Natural killer cell (primary cell): ENCODE measurements at regions of chr22 and their contacts with region 1.

Region 1: DNA sequence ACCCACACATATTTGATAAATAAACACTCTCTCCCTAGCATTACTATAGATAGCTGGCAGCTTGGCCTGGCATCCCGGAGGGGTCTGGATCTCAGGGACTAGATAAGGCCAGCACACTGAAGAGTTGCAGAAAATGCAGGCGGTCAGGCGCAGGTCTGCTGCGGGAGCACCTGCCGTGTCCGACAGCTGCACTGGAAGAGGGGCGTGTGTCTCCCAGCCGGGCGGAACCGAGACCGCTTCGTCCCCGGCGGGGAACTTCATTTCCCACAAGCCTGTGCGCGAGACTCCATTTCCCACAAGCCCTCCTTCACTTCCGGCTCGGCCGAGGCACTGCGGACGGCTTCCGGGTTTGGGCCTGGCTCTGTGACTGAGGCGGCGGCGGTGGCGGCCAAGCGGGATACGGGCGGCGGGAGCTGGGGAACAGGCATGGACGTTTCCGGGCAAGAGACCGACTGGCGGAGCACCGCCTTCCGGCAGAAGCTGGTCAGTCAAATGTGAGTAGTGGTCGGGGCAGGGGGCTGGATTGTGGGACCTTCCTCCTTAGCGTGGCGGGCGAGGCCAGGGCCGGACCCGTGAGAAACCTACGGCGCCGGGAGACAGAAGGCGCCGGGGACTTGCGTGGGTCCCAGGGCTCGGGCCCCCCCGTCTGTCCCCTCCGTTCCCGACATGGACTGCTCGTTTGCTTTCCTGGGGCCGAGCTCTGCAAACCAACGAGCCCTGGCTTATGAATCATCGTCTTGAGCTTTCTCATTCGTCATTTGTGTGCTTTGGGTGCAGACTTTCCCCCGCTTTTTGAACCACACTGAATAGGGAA is at the start of gene MED15:
- DNase-seq: peak; percentile 80 to 93
- ATAC-seq: peak; percentile 77 to 92 (median 90)
- H3K4me3 ChIP-seq: peak within 1 kb of the TSS; percentile 90
- H3K4me3 Mint-ChIP-seq: peak within 1 kb of the TSS; percentile 98
- H3K27ac ChIP-seq: peak within 1 kb of the TSS; percentile 91
- H3K27ac Mint-ChIP-seq: peak within 1 kb of the TSS; percentile 95 to 98
- H3K4me1 ChIP-seq: peaks cover 42% of the 10 kb centered on the region
- H3K4me1 Mint-ChIP-seq: peaks cover 52 to 54% of the 10 kb centered on the region in 2 donors
- H3K27me3 ChIP-seq: no peaks in the 10 kb centered on the region
- H3K27me3 Mint-ChIP-seq: no peaks in the 10 kb centered on the region
- CTCF ChIP-seq: no peak
- total RNA-seq, gene MED15: 269 to 291 (median 270) TPM

Region 2: GRCh38 chr22:20495861-20496681 is 11.4 kb before region 1 on chr22:
- intact Hi-C with region 1: loop called (anchors 1 kb)
- DNase-seq: peak; percentile 91 to 96
- ATAC-seq: peak; percentile 94 to 98 (median 95)
- H3K4me3 ChIP-seq: peak overlapping the region; percentile 66
- H3K4me3 Mint-ChIP-seq: peak overlapping the region; percentile 96
- H3K27ac ChIP-seq: peak overlapping the region; percentile 97
- H3K27ac Mint-ChIP-seq: peak overlapping the region; percentile 91 to 96
- H3K4me1 ChIP-seq: peaks cover 25% of the 10 kb centered on the region
- H3K4me1 Mint-ChIP-seq: peaks cover 20 to 41% of the 10 kb centered on the region in 2 donors
- H3K27me3 ChIP-seq: no peaks in the 10 kb centered on the region
- H3K27me3 Mint-ChIP-seq: no peaks in the 10 kb centered on the region
- CTCF ChIP-seq: peak; percentile 81

Region 3: DNA sequence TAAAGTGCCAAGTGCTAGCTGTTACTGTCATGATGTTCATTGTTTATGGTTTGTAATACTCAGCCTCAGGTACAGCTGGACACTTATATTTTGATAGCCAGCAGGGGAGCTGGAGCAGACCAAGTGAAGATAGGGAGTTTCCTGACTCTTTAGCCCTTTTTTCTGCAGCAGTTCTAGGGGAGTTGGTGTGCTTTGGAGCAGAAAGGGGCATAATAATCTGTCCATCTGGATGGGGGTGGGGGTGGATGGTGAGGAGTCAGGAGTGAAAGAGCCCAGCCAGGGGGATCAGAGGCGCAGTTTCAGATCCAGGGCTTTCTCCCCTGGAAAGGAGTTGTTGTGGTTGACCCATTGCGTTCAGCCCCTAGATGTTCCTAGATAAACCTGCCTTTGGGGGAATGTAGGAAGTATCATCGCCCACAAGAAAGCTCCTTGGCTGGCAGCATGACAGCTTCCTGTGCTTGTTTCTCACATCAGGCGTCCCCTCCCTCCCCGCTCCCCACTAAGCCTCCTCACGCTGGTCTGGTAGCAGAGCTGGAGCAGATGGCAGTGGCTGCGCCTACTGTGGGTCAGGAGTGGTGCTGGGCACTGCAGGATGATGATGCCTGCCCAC is 41.9 kb after region 1 on chr22:
- intact Hi-C with region 1: loop called (anchors 5 kb)
- DNase-seq: peak in 1 of 2 donors; percentile 88
- ATAC-seq: peak; percentile 76 to 83 (median 77)
- H3K4me3 ChIP-seq: no peak overlapping the region
- H3K4me3 Mint-ChIP-seq: peak overlapping the region; percentile 79
- H3K27ac ChIP-seq: peak overlapping the region; percentile 69
- H3K27ac Mint-ChIP-seq: peak overlapping the region; percentile 94 to 95
- H3K4me1 ChIP-seq: peaks cover 81% of the 10 kb centered on the region
- H3K4me1 Mint-ChIP-seq: peaks cover 63 to 67% of the 10 kb centered on the region in 2 donors
- H3K27me3 ChIP-seq: no peaks in the 10 kb centered on the region
- H3K27me3 Mint-ChIP-seq: no peaks in the 10 kb centered on the region
- CTCF ChIP-seq: no peak